Activated CD4-positive, alpha-beta T cell treated with anti-CD3 and anti-CD28 coated beads for 36 hours (primary cell): ENCODE measurements at regions of chr14 and their contacts with region 1.

Region 1: GRCh38 chr14:89641495-89642175 is 224.6 kb upstream of the FOXN3 start:
- DNase-seq: peak; percentile 45
- ATAC-seq: peak; percentile 96
- H3K4me3 Mint-ChIP-seq: peak overlapping the region; percentile 46
- H3K27ac Mint-ChIP-seq: peak overlapping the region; percentile 91
- H3K4me1 Mint-ChIP-seq: peaks cover 59% of the 10 kb centered on the region
- H3K27me3 Mint-ChIP-seq: no peaks in the 10 kb centered on the region

Region 2: GRCh38 chr14:89351516-89352404 is 289.9 kb before region 1 on chr14:
- CTCF ChIA-PET with region 1: no interaction called
- POLR2A ChIA-PET with region 1: no interaction called
- intact Hi-C with region 1: no loop called
- DNase-seq: peak; percentile 27
- ATAC-seq: peak; percentile 71
- H3K4me3 Mint-ChIP-seq: peak overlapping the region; percentile 57
- H3K27ac Mint-ChIP-seq: peak overlapping the region; percentile 94
- H3K4me1 Mint-ChIP-seq: peaks cover 53% of the 10 kb centered on the region
- H3K27me3 Mint-ChIP-seq: no peaks in the 10 kb centered on the region

Region 3: GRCh38 chr14:89445273-89445973 is 196.2 kb before region 1 on chr14:
- CTCF ChIA-PET with region 1: no interaction called
- POLR2A ChIA-PET with region 1: interaction called, 12 read pairs
- intact Hi-C with region 1: no loop called
- DNase-seq: peak; percentile 61
- ATAC-seq: peak; percentile 88
- H3K4me3 Mint-ChIP-seq: no peak overlapping the region
- H3K27ac Mint-ChIP-seq: peak overlapping the region; percentile 89
- H3K4me1 Mint-ChIP-seq: peaks cover 67% of the 10 kb centered on the region
- H3K27me3 Mint-ChIP-seq: no peaks in the 10 kb centered on the region

Region 4: GRCh38 chr14:89625244-89625713 is 16.4 kb before region 1 on chr14:
- CTCF ChIA-PET with region 1: interaction called, 19 read pairs
- POLR2A ChIA-PET with region 1: interaction called, 9 read pairs
- intact Hi-C with region 1: loop called (anchors 1 kb)
- DNase-seq: no peak
- ATAC-seq: no peak
- H3K4me3 Mint-ChIP-seq: no peak overlapping the region
- H3K27ac Mint-ChIP-seq: peak overlapping the region; percentile 96
- H3K4me1 Mint-ChIP-seq: peaks cover 81% of the 10 kb centered on the region
- H3K27me3 Mint-ChIP-seq: no peaks in the 10 kb centered on the region

Region 5: DNA sequence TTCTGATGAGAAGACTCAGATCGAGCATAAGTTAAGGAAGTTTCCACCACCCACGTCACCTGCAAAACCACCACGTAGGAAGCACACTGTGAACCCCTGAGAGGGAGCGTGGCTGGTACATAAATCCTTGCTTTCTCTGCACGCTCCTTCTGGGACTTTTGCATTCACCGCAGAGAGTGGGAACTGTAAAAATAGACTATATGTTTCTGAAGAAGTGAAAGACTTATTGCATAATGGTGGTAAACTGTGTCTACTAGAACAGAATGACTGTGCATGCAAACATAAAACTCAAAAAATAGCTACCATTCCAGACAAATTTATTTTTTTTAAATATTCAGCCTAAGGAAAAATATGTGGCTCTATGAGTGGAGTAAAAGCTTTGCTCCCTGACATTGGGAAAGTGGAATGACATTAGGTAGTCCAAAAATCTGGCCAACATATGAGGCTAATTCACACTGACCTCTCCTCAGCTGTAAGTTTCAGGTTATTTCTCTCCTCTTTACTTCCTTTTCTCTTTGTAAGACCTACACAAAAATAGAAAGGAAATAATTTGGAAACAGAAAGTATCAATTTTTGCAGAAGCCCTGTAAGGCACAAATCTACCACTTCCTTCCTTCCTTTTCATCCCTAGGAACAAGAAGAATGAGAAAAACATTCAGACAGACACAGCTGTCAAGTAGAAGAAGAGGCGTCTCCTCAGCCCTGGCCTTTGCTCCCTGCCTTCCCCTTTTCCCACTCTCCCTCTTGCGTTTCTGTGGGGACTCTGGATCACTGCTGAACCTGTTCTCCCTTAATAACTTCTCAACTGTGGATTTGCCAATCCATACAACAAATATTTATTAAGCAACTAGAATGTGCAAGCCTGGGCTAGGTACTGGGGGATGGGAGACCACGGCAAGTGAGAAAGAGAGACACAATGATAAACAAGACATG is 39.7 kb after region 1 on chr14:
- CTCF ChIA-PET with region 1: interaction called, 8 read pairs
- POLR2A ChIA-PET with region 1: interaction called, 4 read pairs
- intact Hi-C with region 1: loop called (anchors 2 to 5 kb)
- DNase-seq: peak; percentile 81
- ATAC-seq: peak; percentile 88
- H3K4me3 Mint-ChIP-seq: peak overlapping the region; percentile 58
- H3K27ac Mint-ChIP-seq: peak overlapping the region; percentile 83
- H3K4me1 Mint-ChIP-seq: peaks cover 41% of the 10 kb centered on the region
- H3K27me3 Mint-ChIP-seq: no peaks in the 10 kb centered on the region

Region 6: GRCh38 chr14:89701211-89702043 is 59.8 kb after region 1 on chr14:
- CTCF ChIA-PET with region 1: interaction called, 3 read pairs
- POLR2A ChIA-PET with region 1: no interaction called
- intact Hi-C with region 1: loop called in 1 of 2 experiments (anchors 1 kb)
- DNase-seq: peak; percentile 92
- ATAC-seq: peak; percentile 81
- H3K4me3 Mint-ChIP-seq: peak overlapping the region; percentile 65
- H3K27ac Mint-ChIP-seq: peak overlapping the region; percentile 83
- H3K4me1 Mint-ChIP-seq: peaks cover 49% of the 10 kb centered on the region
- H3K27me3 Mint-ChIP-seq: no peaks in the 10 kb centered on the region

Region 7: DNA sequence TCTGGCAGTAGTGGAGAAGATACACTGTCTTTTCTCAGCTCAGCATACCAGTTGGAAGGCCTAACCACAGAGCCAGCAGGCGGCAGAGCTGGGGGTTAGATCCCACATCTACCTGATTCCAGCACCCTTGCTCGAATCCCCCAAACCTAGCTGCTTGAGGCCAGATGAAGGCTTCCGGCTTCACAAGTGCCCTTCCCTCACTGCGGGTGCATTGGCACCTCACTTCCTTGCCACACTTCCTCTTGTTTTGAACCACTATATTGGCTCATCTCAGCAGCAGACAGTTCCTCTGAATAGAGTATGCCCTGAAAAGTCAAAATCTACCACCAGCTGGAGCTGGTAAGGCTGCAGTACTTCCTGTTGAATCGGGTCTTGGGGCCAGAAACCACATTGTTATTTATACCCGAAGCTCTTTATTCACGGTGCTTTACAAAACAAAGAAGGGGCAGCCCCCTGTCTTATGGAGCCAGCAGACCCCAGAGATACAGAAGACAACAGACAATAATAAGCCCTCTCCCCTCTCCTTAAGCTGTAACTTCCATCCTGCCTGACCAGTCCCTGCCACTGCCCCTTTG is 79.2 kb after region 1 on chr14:
- CTCF ChIA-PET with region 1: interaction called, 3 read pairs
- POLR2A ChIA-PET with region 1: interaction called, 4 read pairs
- intact Hi-C with region 1: loop called in 1 of 2 experiments (anchors 5 kb)
- DNase-seq: peak; percentile 72
- ATAC-seq: peak; percentile 82
- H3K4me3 Mint-ChIP-seq: peak overlapping the region; percentile 37
- H3K27ac Mint-ChIP-seq: peak overlapping the region; percentile 96
- H3K4me1 Mint-ChIP-seq: peaks cover 74% of the 10 kb centered on the region
- H3K27me3 Mint-ChIP-seq: no peaks in the 10 kb centered on the region

Region 8: GRCh38 chr14:89773644-89774316 is 132.1 kb after region 1 on chr14:
- CTCF ChIA-PET with region 1: no interaction called
- POLR2A ChIA-PET with region 1: no interaction called
- intact Hi-C with region 1: no loop called
- DNase-seq: peak; percentile 85
- ATAC-seq: peak; percentile 97
- H3K4me3 Mint-ChIP-seq: peak overlapping the region; percentile 37
- H3K27ac Mint-ChIP-seq: peak overlapping the region; percentile 76
- H3K4me1 Mint-ChIP-seq: peaks cover 21% of the 10 kb centered on the region
- H3K27me3 Mint-ChIP-seq: peaks cover 2% of the 10 kb centered on the region